Activated CD4-positive, alpha-beta T cell treated with anti-CD3 and anti-CD28 coated beads for 36 hours (primary cell): ENCODE measurements at regions of chr19 and their contacts with region 1.

Region 1: GRCh38 chr19:40444192-40445028 is at the start of gene SERTAD3:
- DNase-seq: peak; percentile 98
- ATAC-seq: peak; percentile 70
- H3K4me3 Mint-ChIP-seq: peak within 1 kb of the TSS; percentile 96
- H3K27ac Mint-ChIP-seq: peak within 1 kb of the TSS; percentile 96
- H3K4me1 Mint-ChIP-seq: peaks cover 16% of the 10 kb centered on the region
- H3K27me3 Mint-ChIP-seq: no peaks in the 10 kb centered on the region
- total RNA-seq, gene SERTAD3: 8.4 to 12.0 TPM

Region 2: DNA sequence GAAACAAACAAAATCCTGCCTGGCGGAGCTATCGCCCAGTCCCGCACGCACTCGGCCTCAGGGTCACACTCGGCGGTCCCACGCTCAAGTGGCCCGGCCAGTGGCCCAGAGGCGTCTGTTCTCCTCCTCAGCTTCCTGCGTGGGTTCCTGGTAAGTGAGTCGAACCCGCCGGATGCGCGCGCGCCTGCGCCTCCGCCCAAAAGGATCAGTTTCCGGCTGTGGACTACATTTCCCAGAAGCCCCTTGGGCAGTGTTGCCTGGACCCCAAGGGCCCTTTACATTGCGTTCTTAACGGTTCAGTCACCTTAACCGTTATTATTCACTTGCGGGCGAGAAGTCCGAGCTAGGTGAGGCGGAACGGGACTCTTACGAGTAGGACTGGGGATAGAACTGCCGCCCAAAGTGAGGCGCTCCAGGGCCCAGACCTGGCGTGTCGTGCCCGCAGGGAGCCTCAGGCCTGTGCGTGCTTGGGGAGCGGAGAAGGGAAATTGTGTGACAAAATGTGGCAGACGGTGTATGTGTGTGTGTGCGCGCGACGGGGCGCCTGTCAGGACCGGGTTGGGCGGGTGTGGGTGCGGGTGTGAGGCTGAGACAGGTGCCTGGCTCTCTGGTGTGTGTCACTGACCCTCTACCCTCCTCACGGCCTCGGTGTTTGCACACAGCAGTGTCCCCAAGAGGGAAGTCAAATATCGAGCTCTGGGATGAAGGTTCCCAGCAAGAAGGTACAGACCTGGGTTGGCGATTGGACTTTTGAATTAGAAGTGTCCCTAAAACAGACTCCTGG is 447.4 kb before region 1 on chr19 and contains the start of gene ZNF546:
- CTCF ChIA-PET with region 1: no interaction called
- POLR2A ChIA-PET with region 1: no interaction called
- intact Hi-C with region 1: loop called in 1 of 2 experiments (anchors 10 kb)
- DNase-seq: peak; percentile 94
- ATAC-seq: peak; percentile 90
- H3K4me3 Mint-ChIP-seq: peak within 1 kb of the TSS; percentile 90
- H3K27ac Mint-ChIP-seq: peak within 1 kb of the TSS; percentile 99
- H3K4me1 Mint-ChIP-seq: peaks cover 48% of the 10 kb centered on the region
- H3K27me3 Mint-ChIP-seq: no peaks in the 10 kb centered on the region
- total RNA-seq, gene ZNF546: 6.3 to 6.9 TPM

Region 3: DNA sequence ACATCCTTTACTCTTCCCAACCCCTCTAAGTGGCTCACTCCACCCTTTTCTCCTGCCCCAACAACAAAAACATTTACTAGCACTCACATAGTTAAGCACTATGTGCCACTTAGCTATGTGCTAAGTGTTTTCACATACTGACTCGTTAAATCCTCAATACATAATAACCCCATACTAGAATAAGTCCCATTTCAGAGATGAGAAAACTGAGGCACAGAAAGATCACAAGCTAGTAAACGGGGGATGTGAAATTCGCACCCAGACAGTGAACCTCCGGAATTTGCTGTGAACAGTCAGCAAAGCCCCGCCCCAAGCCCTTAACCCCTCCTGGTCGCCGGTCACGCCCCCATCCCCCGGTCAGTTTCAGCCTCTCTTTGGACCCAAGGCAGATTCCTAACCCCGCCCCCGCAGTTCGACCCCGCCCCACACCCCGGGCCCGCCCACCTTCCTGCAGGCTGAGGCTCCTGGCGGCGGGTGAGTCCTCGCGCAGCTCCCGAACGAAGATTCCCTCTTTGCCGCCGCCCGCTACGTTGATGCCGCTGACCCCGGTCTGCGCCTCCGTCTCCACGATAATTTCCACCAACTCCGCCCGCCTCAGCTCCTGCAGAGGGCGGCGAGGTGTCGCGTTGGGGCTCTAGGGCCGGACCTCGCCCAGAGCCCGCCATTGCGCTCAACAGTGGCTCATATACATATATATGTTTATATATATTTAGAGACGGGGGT is 41.0 kb before region 1 on chr19:
- CTCF ChIA-PET with region 1: interaction called, 3 read pairs
- POLR2A ChIA-PET with region 1: no interaction called
- intact Hi-C with region 1: loop called in 1 of 2 experiments (anchors 1 kb)
- DNase-seq: peak; percentile 94
- ATAC-seq: peak; percentile 67
- H3K4me3 Mint-ChIP-seq: peak overlapping the region; percentile 77
- H3K27ac Mint-ChIP-seq: peak overlapping the region; percentile 0
- H3K4me1 Mint-ChIP-seq: peaks cover 19% of the 10 kb centered on the region
- H3K27me3 Mint-ChIP-seq: no peaks in the 10 kb centered on the region

Region 4: GRCh38 chr19:40457048-40457447 is 12.6 kb after region 1 on chr19:
- CTCF ChIA-PET with region 1: no interaction called
- POLR2A ChIA-PET with region 1: no interaction called
- intact Hi-C with region 1: no loop called
- DNase-seq: no peak
- ATAC-seq: no peak
- H3K4me3 Mint-ChIP-seq: no peak overlapping the region
- H3K27ac Mint-ChIP-seq: no peak overlapping the region
- H3K4me1 Mint-ChIP-seq: no peaks in the 10 kb centered on the region
- H3K27me3 Mint-ChIP-seq: no peaks in the 10 kb centered on the region

Region 5: DNA sequence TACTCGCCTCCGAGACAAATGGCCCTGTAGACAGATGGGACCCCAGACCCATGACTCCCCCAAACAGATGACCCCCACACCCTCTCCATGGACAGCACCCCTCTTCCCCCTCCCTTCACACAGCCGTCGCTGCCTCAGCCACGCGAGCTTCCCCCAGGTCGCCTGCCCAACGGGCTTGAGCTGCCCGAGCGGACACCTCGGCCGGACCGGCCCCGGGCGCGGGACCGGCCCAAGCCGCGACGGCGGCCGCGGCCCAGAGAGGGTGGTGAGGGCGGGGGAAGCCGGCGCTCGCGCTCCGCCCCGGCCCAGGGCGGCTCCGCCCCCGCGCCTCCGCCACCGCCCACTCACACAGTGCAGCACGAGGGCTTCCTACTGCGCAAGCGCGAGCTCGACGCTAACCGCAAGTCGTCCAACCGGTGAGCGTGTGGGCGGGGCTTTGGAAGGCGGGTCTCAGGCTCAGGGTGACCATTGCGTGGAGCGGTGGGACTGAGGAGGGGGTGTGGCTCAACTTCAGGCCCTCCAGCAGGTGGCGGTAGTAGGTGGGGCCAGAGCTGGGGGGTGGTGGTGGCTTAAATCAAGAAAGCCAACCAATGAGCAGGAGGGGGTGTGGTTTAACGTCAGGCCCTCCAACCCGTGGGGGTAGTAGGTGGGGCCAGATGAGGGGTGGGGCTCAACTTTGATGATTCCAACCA is 126.0 kb after region 1 on chr19:
- CTCF ChIA-PET with region 1: no interaction called
- POLR2A ChIA-PET with region 1: no interaction called
- intact Hi-C with region 1: loop called in 1 of 2 experiments (anchors 1 kb)
- DNase-seq: peak; percentile 97
- ATAC-seq: peak; percentile 94
- H3K4me3 Mint-ChIP-seq: peak overlapping the region; percentile 50
- H3K27ac Mint-ChIP-seq: peak overlapping the region; percentile 7
- H3K4me1 Mint-ChIP-seq: peaks cover 12% of the 10 kb centered on the region
- H3K27me3 Mint-ChIP-seq: peaks cover 19% of the 10 kb centered on the region

Region 6: GRCh38 chr19:40614622-40615411 is 170.4 kb after region 1 on chr19:
- CTCF ChIA-PET with region 1: no interaction called
- POLR2A ChIA-PET with region 1: no interaction called
- intact Hi-C with region 1: loop called in 1 of 2 experiments (anchors 1 kb)
- DNase-seq: peak; percentile 98
- ATAC-seq: peak; percentile 55
- H3K4me3 Mint-ChIP-seq: peak overlapping the region; percentile 99
- H3K27ac Mint-ChIP-seq: peak overlapping the region; percentile 100
- H3K4me1 Mint-ChIP-seq: peaks cover 58% of the 10 kb centered on the region
- H3K27me3 Mint-ChIP-seq: no peaks in the 10 kb centered on the region

Region 7: GRCh38 chr19:40777937-40778705 is 333.7 kb after region 1 on chr19 and contains the start of gene RAB4B:
- CTCF ChIA-PET with region 1: no interaction called
- POLR2A ChIA-PET with region 1: no interaction called
- intact Hi-C with region 1: loop called in 1 of 2 experiments (anchors 1 kb)
- DNase-seq: peak; percentile 100
- ATAC-seq: peak; percentile 79
- H3K4me3 Mint-ChIP-seq: peak within 1 kb of the TSS; percentile 84
- H3K27ac Mint-ChIP-seq: peak within 1 kb of the TSS; percentile 94
- H3K4me1 Mint-ChIP-seq: peaks cover 38% of the 10 kb centered on the region
- H3K27me3 Mint-ChIP-seq: no peaks in the 10 kb centered on the region
- total RNA-seq, gene RAB4B: 26.4 to 33.7 TPM